ENCODE measurements at regions of chr7 and their contacts with region 1.

Region 1: GRCh38 chr7:66493235-66494181 is 135.2 kb upstream of the KCTD7 start:
- DNase-seq: peak; percentile 95
- H3K4me3 Mint-ChIP-seq: peak overlapping the region; percentile 86
- H3K27ac Mint-ChIP-seq: peak overlapping the region; percentile 93
- H3K4me1 Mint-ChIP-seq: peaks cover 10% of the 10 kb centered on the region
- H3K27me3 Mint-ChIP-seq: no peaks in the 10 kb centered on the region

Region 2: DNA sequence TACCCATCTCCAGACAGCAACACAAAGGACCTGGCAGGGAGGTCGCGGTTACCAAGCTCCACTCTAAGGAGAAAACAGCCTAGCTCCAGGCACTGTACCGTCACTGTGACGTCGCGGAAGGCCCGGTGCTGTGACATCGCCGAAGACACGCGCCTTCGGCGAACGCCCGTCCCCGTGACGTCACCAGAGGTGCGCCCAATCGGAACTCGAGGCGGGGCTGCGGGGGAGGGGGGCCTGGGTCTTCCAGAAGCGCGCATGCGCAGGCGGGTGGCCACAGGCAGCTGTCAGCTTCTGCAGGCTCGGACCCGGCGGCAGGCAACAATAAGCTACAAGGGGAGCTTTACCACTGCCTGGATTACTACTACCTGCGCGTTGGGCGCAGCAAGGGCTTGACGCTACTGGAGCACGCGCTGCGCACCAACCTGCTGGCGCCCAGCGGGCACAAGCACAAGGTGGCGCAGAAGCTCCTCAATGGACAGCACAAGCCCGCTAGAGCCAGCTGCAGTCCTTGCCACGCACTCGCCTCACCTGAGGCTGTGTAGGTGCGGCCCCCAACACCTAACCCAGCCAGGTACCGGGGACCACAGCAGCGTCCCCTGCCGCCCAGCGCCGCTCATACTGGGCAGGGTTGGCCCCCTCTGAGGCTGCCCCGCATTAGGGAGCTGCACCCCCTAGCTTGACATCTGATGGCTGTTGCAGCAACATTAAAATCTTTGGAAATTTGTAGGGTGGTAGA is 80.0 kb before region 1 on chr7:
- intact Hi-C with region 1: loop called (anchors 1 kb)
- DNase-seq: peak; percentile 79
- H3K4me3 Mint-ChIP-seq: peak overlapping the region; percentile 71
- H3K27ac Mint-ChIP-seq: peak overlapping the region; percentile 47
- H3K4me1 Mint-ChIP-seq: peaks cover 4% of the 10 kb centered on the region
- H3K27me3 Mint-ChIP-seq: no peaks in the 10 kb centered on the region

Measured in activated T-helper 2 cell treated with anti-CD3 and anti-CD28 coated beads, Interferon-gamma antibody, Interleukin-2, Interleukin-4, amounts not matched to agents 10 μg/mL and 5 μg/mL and 100 μg/mL, durations not matched to agents 14 hours and 24 hours and 36 hours (primary cell).